Upper lobe of right lung (tissue), 1 donor: ENCODE measurements at regions of chr15 and their contacts with region 1.

Region 1: DNA sequence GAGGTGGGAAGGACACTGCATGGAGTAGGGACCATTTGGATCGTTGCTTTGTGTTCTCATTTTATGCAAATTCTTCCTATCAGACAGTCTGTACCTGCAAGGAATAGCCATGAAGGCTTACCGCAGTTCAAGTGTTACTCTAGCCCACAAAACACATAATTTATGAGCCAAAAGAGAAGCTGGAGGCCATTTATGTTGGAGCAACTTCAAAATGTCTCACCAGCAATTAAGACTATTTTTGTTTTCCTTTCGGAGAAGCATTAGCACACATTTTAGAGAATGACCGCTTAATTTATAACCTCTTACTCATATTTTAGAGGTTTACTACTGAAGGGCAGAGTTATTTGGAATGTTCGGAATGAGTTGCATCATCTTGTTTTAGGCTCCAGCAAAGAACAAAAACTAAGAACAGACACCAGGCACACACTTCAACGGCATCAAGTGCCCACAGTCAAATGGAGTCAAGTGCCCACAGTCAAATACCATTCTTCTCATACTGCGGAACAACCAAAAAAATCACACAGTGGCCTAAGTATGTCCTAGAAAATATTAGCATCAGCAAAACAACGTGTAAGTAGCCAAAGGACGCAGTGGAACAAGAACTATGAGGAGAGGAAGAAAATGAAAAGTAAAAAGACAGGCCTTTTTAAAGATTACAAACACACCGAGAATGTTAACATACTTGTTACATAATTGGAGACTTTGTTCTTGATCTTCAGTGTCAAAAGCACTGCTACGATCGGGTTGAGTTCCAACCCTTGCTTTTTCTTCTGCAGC is 17.5 kb upstream of the GOLGA8J start:
- DNase-seq: no peak
- ATAC-seq: peak; percentile 88
- H3K4me3 ChIP-seq: no peak overlapping the region
- H3K27ac ChIP-seq: peak overlapping the region; percentile 43
- H3K4me1 ChIP-seq: no peaks in the 10 kb centered on the region
- H3K27me3 ChIP-seq: no peaks in the 10 kb centered on the region
- CTCF ChIP-seq: no peak

Region 2: GRCh38 chr15:29668120-29668602 is 397.1 kb before region 1 on chr15:
- intact Hi-C with region 1: loop called (anchors 10 kb)
- DNase-seq: peak; percentile 81
- ATAC-seq: peak; percentile 92
- H3K4me3 ChIP-seq: no peak overlapping the region
- H3K27ac ChIP-seq: no peak overlapping the region
- H3K4me1 ChIP-seq: peaks cover 3% of the 10 kb centered on the region
- H3K27me3 ChIP-seq: no peaks in the 10 kb centered on the region
- CTCF ChIP-seq: peak; percentile 82

Region 3: DNA sequence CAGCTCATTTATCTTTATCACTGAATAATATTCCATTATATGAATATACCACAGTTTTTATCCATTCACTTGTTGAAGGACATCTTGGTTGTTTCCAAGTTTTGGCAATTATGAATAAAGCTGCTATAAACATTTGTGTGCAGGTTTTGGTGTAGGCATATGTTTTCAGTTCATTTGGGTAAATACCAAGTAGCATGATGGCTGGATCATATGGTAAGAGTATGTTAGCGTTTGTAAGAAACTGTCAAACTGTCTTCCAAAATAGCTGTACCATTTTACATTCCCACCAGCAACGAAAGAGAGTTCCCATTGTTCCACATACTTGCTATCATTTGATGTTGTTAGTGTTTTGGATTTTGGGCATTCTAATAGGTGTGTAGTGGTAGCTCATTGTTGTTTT is 54.5 kb before region 1 on chr15:
- intact Hi-C with region 1: no loop called
- DNase-seq: no peak
- ATAC-seq: no peak
- H3K4me3 ChIP-seq: no peak overlapping the region
- H3K27ac ChIP-seq: no peak overlapping the region
- H3K4me1 ChIP-seq: no peaks in the 10 kb centered on the region
- H3K27me3 ChIP-seq: no peaks in the 10 kb centered on the region
- CTCF ChIP-seq: no peak